Dendritic cell treated with granulocyte-macrophage colony-stimulating factor and Interleukin-4, amounts not matched to agents 40 ng/mL and 50 ng/mL, for 4 days (primary cell): ENCODE measurements at regions of chr9 and their contacts with region 1.

Region 1: GRCh38 chr9:136093995-136094881 is 851 bp downstream of the NACC2 start:
- H3K4me3 Mint-ChIP-seq: peak overlapping the region; percentile 86
- H3K27ac Mint-ChIP-seq: peak overlapping the region; percentile 79
- H3K4me1 Mint-ChIP-seq: peaks cover 65% of the 10 kb centered on the region
- H3K27me3 Mint-ChIP-seq: peaks cover 21% of the 10 kb centered on the region

Region 2: GRCh38 chr9:136045971-136046920 is 48.0 kb before region 1 on chr9:
- intact Hi-C with region 1: loop called (anchors 5 kb)
- H3K4me3 Mint-ChIP-seq: peak overlapping the region; percentile 45
- H3K27ac Mint-ChIP-seq: peak overlapping the region; percentile 55
- H3K4me1 Mint-ChIP-seq: peaks cover 73% of the 10 kb centered on the region
- H3K27me3 Mint-ChIP-seq: no peaks in the 10 kb centered on the region

Region 3: DNA sequence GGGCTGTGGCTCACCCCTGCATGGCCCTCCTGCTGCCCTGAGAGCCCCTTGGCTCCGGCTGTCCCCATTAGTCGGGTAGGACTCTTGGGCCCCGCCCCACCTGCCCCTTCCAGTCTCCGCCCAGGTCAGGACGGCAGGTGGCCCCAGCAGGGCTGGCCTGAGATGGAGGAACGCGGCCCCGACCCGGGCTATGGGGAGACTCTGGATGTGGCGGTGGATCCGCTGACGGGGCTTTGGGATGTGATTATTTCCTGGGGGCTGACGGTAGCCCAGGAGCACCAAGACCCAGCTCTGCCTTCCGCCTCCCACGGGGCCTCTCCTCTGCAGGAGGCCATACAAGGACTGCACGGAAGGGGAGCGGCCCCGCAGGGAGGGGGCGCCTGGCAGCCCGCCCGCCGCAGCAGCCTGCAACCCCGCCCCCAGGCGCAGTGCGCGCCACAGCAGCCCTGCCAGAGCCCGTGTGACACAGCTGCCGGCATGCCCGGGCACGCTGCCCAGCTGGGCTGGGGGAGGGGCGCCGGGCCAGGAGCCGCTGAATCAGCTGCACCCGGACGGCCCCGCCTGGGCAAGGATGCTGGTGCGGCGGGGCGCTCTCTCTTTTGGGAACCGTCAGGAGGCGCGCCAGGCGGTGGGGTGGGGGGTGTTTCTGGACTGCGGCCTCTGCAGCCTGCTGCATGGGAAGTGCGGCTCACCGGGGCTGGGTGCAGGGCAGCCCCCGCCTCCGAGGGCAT is 15.3 kb after region 1 on chr9:
- intact Hi-C with region 1: loop called (anchors 2 kb)
- H3K4me3 Mint-ChIP-seq: peak overlapping the region; percentile 71
- H3K27ac Mint-ChIP-seq: peak overlapping the region; percentile 91
- H3K4me1 Mint-ChIP-seq: peaks cover 79% of the 10 kb centered on the region
- H3K27me3 Mint-ChIP-seq: peaks cover 57% of the 10 kb centered on the region